GM12878 (cell line): ENCODE measurements at regions of chr2 and their contacts with region 1.

Region 1: DNA sequence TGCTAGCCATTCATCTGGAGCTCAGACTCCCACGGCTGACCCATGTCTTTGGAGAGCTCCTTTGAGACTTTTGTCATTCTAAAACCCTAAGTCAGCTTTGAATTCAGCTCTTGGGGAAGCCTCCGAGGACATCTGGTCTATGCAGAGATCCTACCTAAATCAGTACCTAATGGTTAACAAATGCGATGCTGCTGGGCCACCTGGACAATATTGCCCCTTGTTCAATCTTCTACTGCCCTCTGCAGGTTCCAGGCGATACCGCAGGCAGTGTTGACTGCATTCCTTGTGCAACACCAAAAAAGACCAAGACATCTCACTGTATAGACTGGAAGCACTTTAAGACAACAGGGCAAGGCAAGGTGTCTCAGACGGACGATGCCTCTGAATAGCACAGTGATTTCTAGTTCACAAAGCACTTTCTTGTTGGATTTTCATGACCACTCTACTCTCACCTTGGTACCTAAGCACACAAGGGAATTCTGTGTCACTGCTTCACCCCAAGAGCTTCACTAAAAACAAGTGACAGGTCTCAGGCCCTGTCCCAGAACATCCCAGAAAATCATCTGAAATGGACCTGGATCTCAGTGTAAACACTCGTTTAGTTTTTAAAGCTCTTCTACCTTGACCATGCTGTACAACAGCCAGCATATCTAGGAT is 80.9 kb downstream of the XDH start:
- DNase-seq: peak; percentile 24
- ATAC-seq: peak; percentile 98
- H3K4me3 ChIP-seq: no peak overlapping the region
- H3K27ac ChIP-seq: no peak overlapping the region
- H3K4me1 ChIP-seq: no peaks in the 10 kb centered on the region
- H3K27me3 ChIP-seq: peaks cover 0 to 3% of the 10 kb centered on the region in 2 experiments; a peak in 1 of 4 replicates
- CTCF ChIP-seq: peak; percentile 96 to 98 (median 97)
- EP300 ChIP-seq: no peak
- POLR2A ChIP-seq: no peak
- RAD21 ChIP-seq: peak; percentile 99

Region 2: DNA sequence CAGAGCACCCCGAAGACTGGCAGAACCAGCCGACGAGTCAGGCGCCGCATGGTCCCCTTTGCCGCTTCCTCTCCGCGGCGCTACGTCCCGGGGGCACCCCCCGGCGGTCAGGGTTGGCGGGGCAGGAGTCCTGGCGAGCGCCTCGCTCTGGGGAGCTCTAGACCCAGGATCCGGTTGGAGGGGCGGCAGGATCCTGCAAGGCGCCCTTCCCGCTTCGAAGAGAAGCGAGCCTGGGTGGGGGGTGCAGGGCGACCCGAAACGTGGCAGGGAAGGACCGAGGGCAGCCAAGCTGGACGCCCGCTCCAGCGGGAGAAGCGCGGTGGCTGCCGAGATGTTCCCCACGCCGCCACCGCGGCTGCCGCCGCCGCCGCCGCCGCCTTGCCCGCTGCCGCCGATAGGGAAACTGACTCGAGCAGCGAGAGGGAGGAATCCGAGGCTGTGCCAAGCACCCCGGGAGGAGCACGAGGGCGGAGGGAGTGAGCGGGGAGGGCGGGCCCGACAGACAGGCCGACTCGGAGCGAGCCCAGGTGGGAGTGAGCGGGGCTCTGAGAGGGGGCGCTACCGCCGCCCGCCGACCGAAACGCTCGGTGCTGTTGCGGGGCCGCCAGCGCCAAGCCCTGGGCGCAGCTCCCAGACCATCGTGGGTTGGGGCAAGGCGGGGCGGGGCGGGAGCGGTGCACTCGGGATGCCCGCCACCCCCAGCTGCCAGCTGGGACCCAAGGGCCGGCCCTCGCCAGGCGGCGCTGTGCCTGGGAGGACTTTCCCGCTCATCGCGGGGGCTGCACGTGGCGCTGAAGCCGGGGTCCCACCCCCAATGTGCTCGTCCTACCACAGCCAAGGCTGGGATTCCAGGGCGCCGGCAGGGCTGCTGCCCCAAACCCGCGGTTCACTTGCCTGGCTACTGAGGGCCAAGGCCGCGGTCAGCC is 195.4 kb before region 1 on chr2 and contains the start of gene GALNT14:
- CTCF ChIA-PET with region 1: interaction called, 15 read pairs
- POLR2A ChIA-PET with region 1: no interaction called
- RAD21 ChIA-PET with region 1: no interaction called
- SMC1A ChIA-PET with region 1: interaction called, 3 read pairs
- in situ Hi-C with region 1: no loop called
- intact Hi-C with region 1: no loop called
- DNase-seq: no peak
- ATAC-seq: peak; percentile 82
- H3K4me3 ChIP-seq: peak within 1 kb of the TSS; percentile 32; the same call in 1 of the 2 replicates
- H3K27ac ChIP-seq: no peak within 1 kb of the TSS
- H3K4me1 ChIP-seq: no peaks in the 10 kb centered on the region; the same call in 1 of the 2 replicates
- H3K27me3 ChIP-seq: peaks cover 2 to 27% of the 10 kb centered on the region in 2 experiments
- CTCF ChIP-seq: peak; percentile 25 to 50 (median 41); a peak in 4 of 6 replicates
- EP300 ChIP-seq: no peak
- POLR2A ChIP-seq: no peak
- RAD21 ChIP-seq: no peak
- polyA plus RNA-seq, gene GALNT14: 3.7 to 4.1 TPM

Region 3: GRCh38 chr2:31207790-31208189 is 125.9 kb before region 1 on chr2:
- CTCF ChIA-PET with region 1: interaction called, 25 read pairs
- POLR2A ChIA-PET with region 1: no interaction called
- RAD21 ChIA-PET with region 1: interaction called, 5 read pairs
- SMC1A ChIA-PET with region 1: interaction called, 13 read pairs
- in situ Hi-C with region 1: no loop called
- intact Hi-C with region 1: no loop called
- DNase-seq: no peak
- ATAC-seq: peak; percentile 83
- H3K4me3 ChIP-seq: no peak overlapping the region
- H3K27ac ChIP-seq: no peak overlapping the region
- H3K4me1 ChIP-seq: peaks cover 4% of the 10 kb centered on the region; the same call in 1 of the 2 replicates
- H3K27me3 ChIP-seq: no peaks in the 10 kb centered on the region
- CTCF ChIP-seq: peak in 1 of 3 experiments; percentile 16; a peak in 2 of 6 replicates
- EP300 ChIP-seq: no peak
- POLR2A ChIP-seq: no peak
- RAD21 ChIP-seq: no peak

Region 4: GRCh38 chr2:31233741-31234682 is 99.6 kb before region 1 on chr2 and contains the start of gene EHD3:
- CTCF ChIA-PET with region 1: interaction called, 56 read pairs
- POLR2A ChIA-PET with region 1: no interaction called
- RAD21 ChIA-PET with region 1: interaction called, 17 read pairs
- SMC1A ChIA-PET with region 1: interaction called, 8 read pairs
- in situ Hi-C with region 1: no loop called
- intact Hi-C with region 1: loop called (anchors 2 kb)
- DNase-seq: no peak
- ATAC-seq: peak; percentile 99
- H3K4me3 ChIP-seq: peak within 1 kb of the TSS; percentile 48
- H3K27ac ChIP-seq: no peak within 1 kb of the TSS
- H3K4me1 ChIP-seq: no peaks in the 10 kb centered on the region; the same call in 1 of the 2 replicates
- H3K27me3 ChIP-seq: no peaks in the 10 kb centered on the region
- CTCF ChIP-seq: peak; percentile 32 to 61 (median 59); a peak in 5 of 6 replicates
- EP300 ChIP-seq: no peak
- POLR2A ChIP-seq: peak; percentile 54; the same call in 1 of the 2 replicates
- RAD21 ChIP-seq: peak; percentile 48; the same call in 1 of the 2 replicates
- polyA plus RNA-seq, gene EHD3: 1.1 to 1.5 TPM

Region 5: DNA sequence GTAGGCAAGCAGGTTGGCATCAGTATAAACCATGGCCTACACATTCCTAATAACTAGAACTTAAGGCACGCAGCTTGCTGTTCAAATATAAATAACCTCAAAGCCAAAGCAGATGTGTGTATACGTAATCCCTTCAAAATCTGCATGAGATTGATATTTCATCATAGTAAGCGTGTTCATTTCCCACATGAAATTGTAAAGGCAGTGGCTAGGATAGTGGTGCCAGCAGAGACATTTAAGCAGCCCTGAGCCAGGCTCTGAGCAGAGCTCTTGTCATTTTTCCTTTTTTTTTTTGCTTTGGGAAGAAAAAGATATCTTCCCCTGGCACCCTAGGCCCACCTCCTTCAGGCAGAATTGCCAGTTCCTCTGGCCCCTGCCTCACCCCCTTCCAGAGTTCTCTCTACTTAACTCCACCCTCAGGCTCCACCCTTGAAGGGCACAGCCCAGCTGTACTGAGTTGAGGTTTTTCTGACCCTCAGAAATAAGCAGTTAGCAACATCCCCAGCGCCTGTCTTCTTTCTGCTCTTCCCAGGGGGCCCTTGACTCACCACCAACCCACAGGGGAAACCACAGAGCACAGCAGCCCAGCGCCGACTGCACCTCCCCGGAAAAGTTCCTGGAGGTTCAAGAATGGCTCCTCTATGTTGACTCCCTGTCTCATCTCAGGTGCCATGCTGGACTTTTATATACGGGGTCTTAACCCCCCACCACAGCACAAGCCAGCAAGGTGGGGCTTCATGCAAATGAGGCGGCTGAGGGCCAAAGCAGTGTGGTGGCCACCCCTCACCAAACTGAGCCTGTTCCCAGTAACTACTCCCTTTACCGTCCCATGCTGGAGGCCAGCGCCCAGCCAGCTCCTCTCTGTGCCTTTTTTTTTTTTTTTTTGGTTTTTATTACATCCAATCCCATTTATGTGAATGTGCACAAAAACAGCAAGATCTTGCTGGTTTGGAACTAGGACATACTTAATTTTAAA is 15.0 kb before region 1 on chr2:
- CTCF ChIA-PET with region 1: interaction called, 26 read pairs
- POLR2A ChIA-PET with region 1: no interaction called
- RAD21 ChIA-PET with region 1: interaction called, 28 read pairs
- SMC1A ChIA-PET with region 1: interaction called, 14 read pairs
- in situ Hi-C with region 1: no loop called
- intact Hi-C with region 1: no loop called
- DNase-seq: peak; percentile 30
- ATAC-seq: peak; percentile 92
- H3K4me3 ChIP-seq: no peak overlapping the region
- H3K27ac ChIP-seq: no peak overlapping the region
- H3K4me1 ChIP-seq: peaks cover 18% of the 10 kb centered on the region
- H3K27me3 ChIP-seq: no peaks in the 10 kb centered on the region; a peak in 1 of 4 replicates
- CTCF ChIP-seq: no peak
- EP300 ChIP-seq: no peak
- POLR2A ChIP-seq: no peak
- RAD21 ChIP-seq: no peak